ENCODE measurements at regions of chr17 and their contacts with region 1.

Region 1: GRCh38 chr17:42577532-42578281 is at the start of gene PSMC3IP:
- DNase-seq: peak; percentile 76
- ATAC-seq: peak; percentile 87
- H3K4me3 ChIP-seq: peak within 1 kb of the TSS; percentile 79
- H3K27ac ChIP-seq: peak within 1 kb of the TSS; percentile 89
- H3K4me1 ChIP-seq: peaks cover 16% of the 10 kb centered on the region
- H3K27me3 ChIP-seq: no peaks in the 10 kb centered on the region
- CTCF ChIP-seq: peak; percentile 34 to 64 (median 56); a peak in 4 of 6 replicates
- EP300 ChIP-seq: no peak
- POLR2A ChIP-seq: peak; percentile 85
- RAD21 ChIP-seq: no peak
- polyA plus RNA-seq, gene PSMC3IP: 6.8 to 7.1 TPM

Region 2: DNA sequence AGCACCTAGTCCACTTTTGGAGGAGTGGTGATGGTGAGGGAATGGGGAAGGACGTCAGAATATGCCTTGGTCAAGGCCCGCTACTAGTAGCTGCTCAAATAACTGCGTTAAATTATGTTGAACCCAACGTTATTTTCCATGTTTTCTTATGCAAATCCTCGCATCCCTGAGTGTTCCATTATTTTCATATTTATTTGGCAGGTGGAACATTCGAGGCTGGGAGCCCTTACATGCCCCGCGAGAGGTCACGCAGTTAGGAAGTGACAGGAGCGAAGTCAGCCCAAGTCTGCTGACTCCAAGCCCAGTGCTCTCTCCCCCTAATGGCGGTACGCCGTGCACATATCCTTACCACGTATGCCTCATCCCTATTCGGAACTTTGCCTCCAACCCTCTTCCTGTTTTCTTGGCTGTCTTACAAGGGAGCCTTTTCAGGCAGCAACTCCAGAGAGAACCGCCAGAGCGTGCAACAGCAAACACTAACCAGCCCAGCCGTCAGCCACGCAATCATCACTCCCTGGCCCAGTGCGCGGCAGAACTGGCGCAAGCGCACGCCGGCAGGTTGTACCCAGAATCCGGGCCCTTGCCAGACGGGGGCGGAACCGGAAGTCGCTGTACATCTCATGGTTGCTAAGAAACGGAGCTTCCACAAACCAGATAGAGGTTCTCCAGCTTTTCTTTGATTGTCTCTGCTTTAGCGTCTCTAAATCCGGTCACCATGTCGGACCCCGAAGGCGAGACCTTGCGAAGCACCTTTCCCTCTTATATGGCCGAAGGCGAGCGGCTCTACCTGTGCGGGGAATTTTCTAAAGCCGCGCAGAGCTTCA is 647.5 kb before region 1 on chr17 and contains the start of gene ODAD4:
- CTCF ChIA-PET with region 1: no interaction called
- POLR2A ChIA-PET with region 1: no interaction called
- RAD21 ChIA-PET with region 1: no interaction called
- SMC1A ChIA-PET with region 1: no interaction called
- in situ Hi-C with region 1: no loop called
- intact Hi-C with region 1: no loop called
- DNase-seq: peak; percentile 76
- ATAC-seq: peak; percentile 100
- H3K4me3 ChIP-seq: peak within 1 kb of the TSS; percentile 81
- H3K27ac ChIP-seq: peak within 1 kb of the TSS; percentile 62
- H3K4me1 ChIP-seq: peaks cover 7% of the 10 kb centered on the region
- H3K27me3 ChIP-seq: no peaks in the 10 kb centered on the region
- CTCF ChIP-seq: peak in 2 of 3 experiments; percentile 30 to 48; a peak in 3 of 6 replicates
- EP300 ChIP-seq: no peak
- POLR2A ChIP-seq: peak; percentile 97
- RAD21 ChIP-seq: no peak
- polyA plus RNA-seq, gene ODAD4: 0.10 to 0.44 TPM

Region 3: DNA sequence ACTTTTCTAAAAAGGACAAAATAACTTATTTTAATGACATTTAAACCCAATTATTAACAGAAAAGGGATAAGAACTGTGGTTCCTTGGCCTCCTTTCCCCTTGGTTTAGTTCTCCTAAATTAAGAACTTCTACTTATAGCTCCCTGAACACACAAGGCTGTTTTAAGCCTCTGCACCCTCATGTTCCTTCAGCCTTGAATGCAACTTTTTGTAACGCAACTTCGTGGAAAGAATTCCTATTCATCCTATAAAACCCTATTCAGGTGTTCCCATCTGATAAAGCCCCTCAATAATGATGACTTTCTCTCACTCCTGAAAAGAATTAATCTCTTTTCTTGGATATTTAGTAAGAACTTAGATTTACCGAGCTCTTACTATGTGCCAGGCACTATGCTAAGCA is 195.8 kb before region 1 on chr17:
- CTCF ChIA-PET with region 1: no interaction called
- POLR2A ChIA-PET with region 1: no interaction called
- RAD21 ChIA-PET with region 1: no interaction called
- SMC1A ChIA-PET with region 1: no interaction called
- in situ Hi-C with region 1: no loop called
- intact Hi-C with region 1: no loop called
- DNase-seq: no peak
- ATAC-seq: no peak
- H3K4me3 ChIP-seq: peak overlapping the region; percentile 38; the same call in 1 of the 2 replicates
- H3K27ac ChIP-seq: 0 out of 2 replicates have a peak overlapping the region, but pooled peaks have one; percentile 12
- H3K4me1 ChIP-seq: peaks cover 19% of the 10 kb centered on the region
- H3K27me3 ChIP-seq: no peaks in the 10 kb centered on the region
- CTCF ChIP-seq: no peak
- EP300 ChIP-seq: no peak
- POLR2A ChIP-seq: no peak
- RAD21 ChIP-seq: no peak

Region 4: DNA sequence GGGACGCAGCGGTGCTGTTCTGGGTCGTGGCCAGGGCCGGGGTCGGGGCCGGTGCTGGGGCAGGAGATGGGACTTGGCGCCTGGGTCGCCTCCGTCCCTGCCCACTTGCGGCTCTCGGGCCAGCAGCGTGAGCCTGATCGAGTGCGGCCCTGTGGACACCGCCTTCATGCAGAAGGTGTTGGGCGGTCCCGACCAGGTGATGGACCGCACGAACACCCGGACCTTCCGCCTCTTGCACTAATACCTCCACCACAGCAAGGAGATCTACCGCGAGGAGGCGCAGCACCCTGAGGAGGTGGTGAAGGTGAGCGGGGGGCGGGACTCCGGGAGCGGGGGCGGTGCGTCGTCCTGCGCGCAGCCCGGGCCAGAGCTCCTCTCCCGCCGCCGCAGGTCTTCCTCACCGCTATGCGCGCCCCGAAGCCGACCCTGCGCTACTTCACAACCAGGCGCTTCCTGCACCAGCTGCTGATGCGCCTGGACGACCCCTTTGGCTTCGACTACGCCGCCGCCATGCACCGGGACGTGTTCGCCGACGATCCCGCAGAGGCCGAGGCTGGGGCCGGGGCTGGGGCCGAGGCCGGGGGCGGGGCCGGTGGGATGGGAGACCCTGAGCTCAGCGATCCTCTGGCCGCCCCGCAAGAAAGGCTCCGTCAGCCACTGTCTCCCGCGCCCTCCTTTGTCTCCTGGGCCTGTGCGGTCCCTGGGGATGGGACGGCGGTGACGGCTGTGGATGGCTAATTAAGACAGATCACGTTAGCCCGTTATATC is 29.5 kb before region 1 on chr17:
- CTCF ChIA-PET with region 1: interaction called, 14 read pairs
- POLR2A ChIA-PET with region 1: interaction called, 6 read pairs
- RAD21 ChIA-PET with region 1: interaction called, 11 read pairs
- SMC1A ChIA-PET with region 1: interaction called, 3 read pairs
- in situ Hi-C with region 1: no loop called
- intact Hi-C with region 1: no loop called
- DNase-seq: no peak
- ATAC-seq: peak; percentile 96
- H3K4me3 ChIP-seq: peak overlapping the region; percentile 58
- H3K27ac ChIP-seq: no peak overlapping the region
- H3K4me1 ChIP-seq: peaks cover 11% of the 10 kb centered on the region
- H3K27me3 ChIP-seq: no peaks in the 10 kb centered on the region
- CTCF ChIP-seq: peak; percentile 60 to 71 (median 69); a peak in 5 of 6 replicates
- EP300 ChIP-seq: no peak
- POLR2A ChIP-seq: peak; percentile 71; the same call in 1 of the 2 replicates
- RAD21 ChIP-seq: peak; percentile 59

Region 5: GRCh38 chr17:42609182-42609813 is 31.6 kb after region 1 on chr17 and contains the starts of genes RETREG3 and TUBG1:
- CTCF ChIA-PET with region 1: interaction called, 49 read pairs
- POLR2A ChIA-PET with region 1: interaction called, 33 read pairs
- RAD21 ChIA-PET with region 1: interaction called, 58 read pairs
- SMC1A ChIA-PET with region 1: interaction called, 69 read pairs
- in situ Hi-C with region 1: no loop called
- intact Hi-C with region 1: loop called (anchors 2 kb)
- DNase-seq: peak; percentile 98
- ATAC-seq: peak; percentile 90
- H3K4me3 ChIP-seq: peak within 1 kb of the TSS; percentile 98
- H3K27ac ChIP-seq: peak within 1 kb of the TSS; percentile 90
- H3K4me1 ChIP-seq: no peaks in the 10 kb centered on the region; the same call in 1 of the 2 replicates
- H3K27me3 ChIP-seq: no peaks in the 10 kb centered on the region
- CTCF ChIP-seq: peak; percentile 16 to 24 (median 20); a peak in 2 of 6 replicates
- EP300 ChIP-seq: no peak
- POLR2A ChIP-seq: peak; percentile 91
- RAD21 ChIP-seq: no peak
- polyA plus RNA-seq, gene RETREG3: 7.0 to 9.0 TPM
- polyA plus RNA-seq, gene TUBG1: 40.0 to 40.3 TPM

Region 6: DNA sequence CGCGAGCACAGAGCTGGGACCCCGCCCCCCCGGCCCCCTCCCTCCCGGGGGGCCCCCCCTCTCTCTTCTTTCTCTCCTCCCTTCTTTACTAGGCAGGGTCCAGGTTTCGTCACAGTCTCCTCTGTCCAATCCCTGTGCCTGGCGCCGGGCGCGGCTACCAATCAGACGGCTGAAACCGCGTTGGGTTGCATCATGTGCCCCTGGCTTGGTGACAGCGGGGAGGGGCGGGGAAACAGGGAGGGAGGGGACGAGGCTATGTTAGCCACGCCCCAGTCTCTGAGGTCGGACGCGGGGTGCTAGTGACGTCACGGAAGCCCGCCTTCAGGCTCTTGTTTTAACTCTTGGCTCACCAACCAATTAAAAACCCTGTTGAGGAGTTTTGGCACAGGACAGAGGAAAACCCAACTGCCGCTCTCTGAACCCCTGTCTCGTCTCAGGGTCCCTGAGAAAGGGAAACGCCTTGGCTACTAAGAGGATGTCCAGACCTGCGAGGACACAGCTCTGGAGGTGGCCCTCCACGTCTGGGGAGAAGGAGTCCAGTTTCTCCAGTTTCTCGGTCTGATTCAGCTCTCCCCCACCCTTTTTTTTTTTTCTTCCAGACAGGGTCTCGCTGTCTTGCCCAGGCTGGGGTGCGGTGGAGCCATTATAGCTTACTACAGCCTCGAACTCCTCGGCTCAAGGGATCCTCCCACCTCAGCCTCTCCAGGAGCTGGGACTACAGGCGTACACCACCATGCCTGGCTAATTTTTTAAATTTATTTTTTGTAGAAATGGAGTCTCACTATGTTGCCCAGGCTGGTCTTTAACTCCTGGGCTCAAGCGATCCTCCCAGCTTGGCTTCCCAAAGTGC is 99.5 kb after region 1 on chr17:
- CTCF ChIA-PET with region 1: interaction called, 239 read pairs
- POLR2A ChIA-PET with region 1: interaction called, 120 read pairs
- RAD21 ChIA-PET with region 1: interaction called, 152 read pairs
- SMC1A ChIA-PET with region 1: interaction called, 124 read pairs
- in situ Hi-C with region 1: no loop called
- intact Hi-C with region 1: loop called (anchors 1 kb)
- DNase-seq: peak; percentile 99
- ATAC-seq: peak; percentile 71
- H3K4me3 ChIP-seq: peak overlapping the region; percentile 98
- H3K27ac ChIP-seq: peak overlapping the region; percentile 93
- H3K4me1 ChIP-seq: peaks cover 19% of the 10 kb centered on the region
- H3K27me3 ChIP-seq: no peaks in the 10 kb centered on the region
- CTCF ChIP-seq: no peak
- EP300 ChIP-seq: peak in 1 of 2 experiments; percentile 12; a peak in 1 of 4 replicates
- POLR2A ChIP-seq: no peak
- RAD21 ChIP-seq: no peak

Region 7: GRCh38 chr17:42720996-42721583 is 143.4 kb after region 1 on chr17:
- CTCF ChIA-PET with region 1: interaction called, 20 read pairs
- POLR2A ChIA-PET with region 1: interaction called, 4 read pairs
- RAD21 ChIA-PET with region 1: interaction called, 5 read pairs
- SMC1A ChIA-PET with region 1: interaction called, 22 read pairs
- in situ Hi-C with region 1: no loop called
- intact Hi-C with region 1: no loop called
- DNase-seq: no peak
- ATAC-seq: peak; percentile 94
- H3K4me3 ChIP-seq: no peak overlapping the region
- H3K27ac ChIP-seq: no peak overlapping the region
- H3K4me1 ChIP-seq: no peaks in the 10 kb centered on the region
- H3K27me3 ChIP-seq: no peaks in the 10 kb centered on the region
- CTCF ChIP-seq: peak; percentile 61 to 83 (median 78); a peak in 5 of 6 replicates
- EP300 ChIP-seq: no peak
- POLR2A ChIP-seq: no peak
- RAD21 ChIP-seq: peak; percentile 73

Region 8: DNA sequence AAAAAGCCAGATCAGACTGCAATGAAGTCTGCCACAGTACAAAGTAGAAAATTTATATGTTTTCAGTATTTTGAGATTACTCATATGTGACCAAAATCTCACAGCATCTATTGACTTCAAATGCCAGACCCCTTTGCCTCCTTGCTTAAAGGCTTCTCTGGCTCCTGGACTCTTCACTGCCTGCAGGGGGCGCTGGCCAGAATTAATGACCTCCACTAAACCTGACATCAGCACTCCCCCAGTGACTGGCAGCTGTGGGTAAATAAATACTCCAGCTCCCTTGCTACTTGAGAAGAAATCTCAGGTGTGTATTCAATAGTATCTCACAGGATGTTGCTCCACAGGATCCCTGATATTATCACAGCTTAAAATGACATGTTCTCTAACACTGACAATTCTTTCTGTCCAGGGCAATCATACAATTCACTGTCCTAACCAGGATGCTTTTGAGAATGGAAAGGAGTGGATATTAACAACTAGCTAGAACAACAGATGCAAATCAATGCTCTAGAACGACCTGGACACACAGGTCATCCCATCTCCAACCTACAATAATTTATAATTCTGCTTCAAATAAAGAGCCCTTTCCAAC is 242.3 kb after region 1 on chr17:
- CTCF ChIA-PET with region 1: interaction called, 16 read pairs
- POLR2A ChIA-PET with region 1: no interaction called
- RAD21 ChIA-PET with region 1: interaction called, 19 read pairs
- SMC1A ChIA-PET with region 1: interaction called, 6 read pairs
- in situ Hi-C with region 1: no loop called
- intact Hi-C with region 1: loop called (anchors 2 kb)
- DNase-seq: no peak
- ATAC-seq: peak; percentile 69
- H3K4me3 ChIP-seq: no peak overlapping the region
- H3K27ac ChIP-seq: no peak overlapping the region
- H3K4me1 ChIP-seq: peaks cover 6% of the 10 kb centered on the region; the same call in 1 of the 2 replicates
- H3K27me3 ChIP-seq: no peaks in the 10 kb centered on the region
- CTCF ChIP-seq: peak; percentile 68 to 88 (median 74)
- EP300 ChIP-seq: no peak
- POLR2A ChIP-seq: no peak
- RAD21 ChIP-seq: peak; percentile 31; the same call in 1 of the 2 replicates

Measured in GM12878 (cell line).